Activated CD4-positive, alpha-beta T cell treated with anti-CD3 and anti-CD28 coated beads for 36 hours (primary cell): ENCODE measurements at regions of chr12 and their contacts with region 1.

Region 1: GRCh38 chr12:124493809-124494750 is 73.3 kb downstream of the NCOR2 start:
- DNase-seq: peak; percentile 84
- ATAC-seq: peak; percentile 96
- H3K4me3 Mint-ChIP-seq: peak overlapping the region; percentile 25
- H3K27ac Mint-ChIP-seq: peak overlapping the region; percentile 91
- H3K4me1 Mint-ChIP-seq: peaks cover 48% of the 10 kb centered on the region
- H3K27me3 Mint-ChIP-seq: no peaks in the 10 kb centered on the region

Region 2: GRCh38 chr12:124759841-124760503 is 265.9 kb after region 1 on chr12:
- CTCF ChIA-PET with region 1: no interaction called
- POLR2A ChIA-PET with region 1: no interaction called
- intact Hi-C with region 1: loop called in 1 of 2 experiments (anchors 1 kb)
- DNase-seq: no peak
- ATAC-seq: no peak
- H3K4me3 Mint-ChIP-seq: no peak overlapping the region
- H3K27ac Mint-ChIP-seq: no peak overlapping the region
- H3K4me1 Mint-ChIP-seq: peaks cover 35% of the 10 kb centered on the region
- H3K27me3 Mint-ChIP-seq: peaks cover 14% of the 10 kb centered on the region

Region 3: GRCh38 chr12:125424909-125425308 is 930.8 kb after region 1 on chr12:
- CTCF ChIA-PET with region 1: no interaction called
- POLR2A ChIA-PET with region 1: no interaction called
- intact Hi-C with region 1: no loop called
- DNase-seq: no peak
- ATAC-seq: no peak
- H3K4me3 Mint-ChIP-seq: no peak overlapping the region
- H3K27ac Mint-ChIP-seq: no peak overlapping the region
- H3K4me1 Mint-ChIP-seq: no peaks in the 10 kb centered on the region
- H3K27me3 Mint-ChIP-seq: no peaks in the 10 kb centered on the region